ENCODE measurements at regions of chr21 and their contacts with region 1.

Region 1: DNA sequence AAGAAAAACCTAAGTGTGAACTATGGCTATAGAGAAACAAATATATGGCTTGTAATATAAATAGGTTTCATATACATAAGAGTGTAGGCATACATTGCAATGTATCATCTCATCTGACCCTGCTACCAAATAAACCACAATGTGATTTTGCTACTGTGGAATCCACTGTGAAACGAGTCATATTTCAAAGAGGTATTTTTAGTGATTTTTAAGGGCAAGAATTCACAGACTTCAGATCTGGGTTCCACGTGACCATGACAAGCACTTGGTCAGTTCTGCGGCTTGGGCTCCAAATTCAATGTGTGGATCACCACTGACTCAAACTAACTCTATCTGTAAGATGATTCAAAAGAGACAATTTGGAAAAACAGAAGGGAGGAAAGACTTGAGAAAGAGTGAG is 147.0 kb upstream of the ERG start:
- DNase-seq: no peak
- H3K4me3 ChIP-seq: no peak overlapping the region
- H3K27ac ChIP-seq: peak overlapping the region; percentile 68 to 71
- H3K4me1 ChIP-seq: peaks cover 2 to 53% of the 10 kb centered on the region in 2 donors
- H3K27me3 ChIP-seq: no peaks in the 10 kb centered on the region
- CTCF ChIP-seq: no peak

Region 2: DNA sequence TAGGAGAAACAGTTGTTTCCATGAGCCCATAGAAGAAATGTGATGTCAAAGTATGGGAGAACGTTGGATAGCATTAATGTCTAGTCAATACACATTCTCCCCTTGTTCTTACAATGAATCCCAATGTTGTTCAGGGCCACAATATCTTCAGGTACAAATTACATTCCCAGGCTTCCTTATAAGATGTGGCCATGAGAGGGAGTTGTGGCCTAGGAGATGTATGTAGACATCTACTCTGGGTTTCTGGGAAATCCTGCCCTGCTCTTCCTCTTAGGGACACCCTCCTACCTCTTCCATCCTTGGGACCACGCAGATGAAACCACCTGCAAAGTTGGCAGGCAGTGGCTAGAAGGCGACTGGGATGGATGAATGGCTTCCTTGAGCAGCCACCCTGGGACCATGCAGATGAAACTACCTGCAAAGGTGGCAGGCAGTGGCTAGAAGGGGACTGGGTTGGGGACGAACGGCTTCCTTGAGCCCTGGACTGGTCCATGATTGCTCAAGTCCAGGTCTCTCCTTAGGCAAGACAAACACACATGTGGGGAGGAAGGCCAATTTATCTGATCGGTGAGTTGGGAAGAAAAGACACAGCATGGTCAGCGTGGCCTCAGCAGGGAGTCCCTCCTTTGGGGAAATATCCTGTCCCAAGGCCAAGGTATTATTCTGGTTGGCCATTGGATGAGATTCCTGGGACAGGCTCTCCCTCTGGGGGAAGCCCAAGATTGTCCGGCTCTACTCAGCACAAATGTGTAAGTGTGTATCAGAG is 30.9 kb before region 1 on chr21:
- intact Hi-C with region 1: loop called (anchors 5 kb)
- DNase-seq: no peak
- H3K4me3 ChIP-seq: no peak overlapping the region
- H3K27ac ChIP-seq: no peak overlapping the region
- H3K4me1 ChIP-seq: peaks cover 10 to 36% of the 10 kb centered on the region in 2 donors
- H3K27me3 ChIP-seq: no peaks in the 10 kb centered on the region
- CTCF ChIP-seq: no peak

Measured in ascending aorta (tissue), 2 donors.